Tibial artery (tissue), 4 donors: ENCODE measurements at regions of chr3 and their contacts with region 1.

Region 1: GRCh38 chr3:68706096-68706495 is 226.3 kb downstream of the TAFA4 start:
- DNase-seq: peak; percentile 51 to 85
- H3K4me3 ChIP-seq: no peak overlapping the region
- H3K27ac ChIP-seq: peak overlapping the region; percentile 33 to 50
- H3K4me1 ChIP-seq: peaks cover 0 to 49% (median 16%) of the 10 kb centered on the region in 4 donors
- H3K27me3 ChIP-seq: no peaks in the 10 kb centered on the region
- CTCF ChIP-seq: no peak

Region 2: DNA sequence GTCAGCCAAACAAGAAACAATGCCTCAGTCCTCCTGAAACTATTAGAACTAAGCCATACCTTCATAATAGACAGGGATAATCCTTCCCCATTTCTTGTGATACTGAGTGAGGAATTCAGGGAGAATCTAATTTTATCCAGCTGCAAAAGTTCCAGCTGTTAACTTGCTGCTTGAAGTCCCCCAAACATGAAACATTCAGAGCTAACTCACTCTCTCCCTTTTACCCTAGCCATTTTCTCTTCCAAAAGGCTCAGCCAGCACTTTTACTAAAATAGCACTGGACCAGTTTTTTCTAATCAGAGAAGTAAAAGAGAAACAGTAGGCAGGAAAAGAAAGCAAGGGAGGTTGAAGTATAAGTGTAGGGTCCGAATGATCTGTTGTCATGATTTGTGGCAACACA is 41.8 kb before region 1 on chr3:
- intact Hi-C with region 1: loop called (anchors 2 kb)
- DNase-seq: no peak
- H3K4me3 ChIP-seq: no peak overlapping the region
- H3K27ac ChIP-seq: peak overlapping the region; percentile 28 to 61
- H3K4me1 ChIP-seq: peaks cover 0 to 56% (median 17%) of the 10 kb centered on the region in 4 donors
- H3K27me3 ChIP-seq: no peaks in the 10 kb centered on the region
- CTCF ChIP-seq: no peak